GM18951 (cell line): ENCODE measurements at regions of chr11 and their contacts with region 1.

Region 1: GRCh38 chr11:26649884-26650283 is 72.0 kb downstream of the SLC5A12 start:
- POLR2A ChIP-seq: no peak

Region 2: DNA sequence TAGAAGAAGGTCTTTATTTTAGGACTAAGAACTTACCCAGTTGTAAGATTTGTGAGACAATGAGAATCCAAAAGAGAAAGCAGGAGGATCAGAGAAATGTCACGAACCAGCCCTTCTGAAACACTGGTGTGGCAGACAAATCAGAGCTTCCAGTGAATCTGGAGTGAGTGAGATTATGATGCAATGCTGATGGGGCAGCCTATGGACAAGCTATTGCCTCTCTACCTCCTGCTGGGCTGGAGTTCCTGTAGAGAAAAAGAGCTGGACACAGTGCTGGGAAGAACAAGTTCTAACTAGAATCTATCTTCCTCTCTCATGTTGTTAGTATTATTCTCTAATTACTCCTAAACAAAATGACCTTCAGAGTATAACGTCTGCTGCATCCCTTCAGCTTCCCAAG is 330.0 kb before region 1 on chr11:
- in situ Hi-C with region 1: loop called (anchors 25 kb)
- POLR2A ChIP-seq: no peak